CD8-positive, alpha-beta memory T cell (primary cell): ENCODE measurements at regions of chr1 and their contacts with region 1.

Region 1: GRCh38 chr1:154760469-154760933 is 109.6 kb downstream of the KCNN3 start:
- DNase-seq: peak; percentile 76 to 86 (median 77)
- H3K4me3 ChIP-seq: peak overlapping the region; percentile 39
- H3K4me3 Mint-ChIP-seq: peak overlapping the region in 4 of 7 donors; percentile 10 to 66 (median 56)
- H3K27ac ChIP-seq: no peak overlapping the region
- H3K27ac Mint-ChIP-seq: no peak overlapping the region
- H3K4me1 ChIP-seq: peaks cover 22% of the 10 kb centered on the region
- H3K4me1 Mint-ChIP-seq: peaks cover 13 to 19% (median 14%) of the 10 kb centered on the region in 3 donors
- H3K27me3 ChIP-seq: no peaks in the 10 kb centered on the region
- H3K27me3 Mint-ChIP-seq: peaks cover 13 to 25% of the 10 kb centered on the region in 2 donors

Region 2: GRCh38 chr1:154558575-154559465 is 201.7 kb before region 1 on chr1 and contains the start of gene UBE2Q1:
- CTCF ChIA-PET with region 1: interaction called, 28 read pairs
- POLR2A ChIA-PET with region 1: interaction called, 5 read pairs
- DNase-seq: peak; percentile 99 to 100 (median 100)
- H3K4me3 ChIP-seq: peak within 1 kb of the TSS; percentile 87
- H3K4me3 Mint-ChIP-seq: peak within 1 kb of the TSS; percentile 90 to 96 (median 92)
- H3K27ac ChIP-seq: peak within 1 kb of the TSS; percentile 65
- H3K27ac Mint-ChIP-seq: peak within 1 kb of the TSS; percentile 86 to 96 (median 94)
- H3K4me1 ChIP-seq: peaks cover 24% of the 10 kb centered on the region
- H3K4me1 Mint-ChIP-seq: peaks cover 36 to 49% (median 46%) of the 10 kb centered on the region in 3 donors
- H3K27me3 ChIP-seq: no peaks in the 10 kb centered on the region
- H3K27me3 Mint-ChIP-seq: peaks cover 0 to 2% of the 10 kb centered on the region in 2 donors
- total RNA-seq, gene UBE2Q1: 83.8 to 97.8 TPM

Region 3: GRCh38 chr1:154669464-154670282 is 90.8 kb before region 1 on chr1:
- CTCF ChIA-PET with region 1: interaction called, 10 read pairs
- POLR2A ChIA-PET with region 1: no interaction called
- DNase-seq: peak; percentile 37 to 82 (median 55)
- H3K4me3 ChIP-seq: no peak overlapping the region
- H3K4me3 Mint-ChIP-seq: no peak overlapping the region
- H3K27ac ChIP-seq: no peak overlapping the region
- H3K27ac Mint-ChIP-seq: no peak overlapping the region
- H3K4me1 ChIP-seq: no peaks in the 10 kb centered on the region
- H3K4me1 Mint-ChIP-seq: no peaks in the 10 kb centered on the region
- H3K27me3 ChIP-seq: no peaks in the 10 kb centered on the region
- H3K27me3 Mint-ChIP-seq: peaks cover 3 to 11% of the 10 kb centered on the region in 2 donors

Region 4: DNA sequence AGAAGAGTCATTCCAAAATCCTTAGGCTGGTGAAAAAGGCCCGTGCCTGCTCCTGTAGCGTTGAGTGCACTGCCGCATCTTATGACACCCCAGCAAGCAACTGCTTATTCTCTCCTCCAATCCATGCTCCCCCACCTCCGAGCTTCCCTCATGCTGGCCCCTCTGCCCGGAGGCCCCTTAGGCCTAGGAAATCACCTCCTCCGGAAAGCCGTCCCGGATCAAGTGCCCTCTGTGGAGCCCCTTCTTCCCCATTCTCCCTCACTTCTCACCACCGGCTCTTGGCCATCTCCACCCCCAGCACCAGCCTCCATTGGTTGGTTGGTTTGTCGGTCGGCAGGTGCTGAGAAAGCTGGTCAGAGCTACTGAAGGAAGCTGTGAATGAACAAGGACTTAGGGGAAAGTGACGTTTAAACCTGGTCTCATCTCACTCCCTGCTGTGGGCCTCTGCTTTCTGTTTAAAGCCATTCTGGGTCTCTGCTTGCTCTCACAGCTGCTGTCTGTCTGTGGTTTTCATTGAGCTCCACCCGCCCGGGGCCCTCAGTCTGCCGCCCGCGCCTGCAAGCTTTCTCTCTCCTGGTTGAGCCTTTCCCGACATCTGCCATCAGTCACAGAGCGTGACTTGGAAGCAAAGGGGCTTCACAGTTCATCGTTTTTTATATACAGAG is 12.6 kb before region 1 on chr1:
- CTCF ChIA-PET with region 1: interaction called, 16 read pairs
- POLR2A ChIA-PET with region 1: no interaction called
- DNase-seq: peak in 4 of 5 donors; percentile 31 to 59 (median 42)
- H3K4me3 ChIP-seq: no peak overlapping the region
- H3K4me3 Mint-ChIP-seq: peak overlapping the region in 6 of 7 donors; percentile 57 to 81 (median 63)
- H3K27ac ChIP-seq: no peak overlapping the region
- H3K27ac Mint-ChIP-seq: peak overlapping the region; percentile 28 to 91 (median 77)
- H3K4me1 ChIP-seq: peaks cover 50% of the 10 kb centered on the region
- H3K4me1 Mint-ChIP-seq: peaks cover 39 to 51% (median 44%) of the 10 kb centered on the region in 3 donors
- H3K27me3 ChIP-seq: no peaks in the 10 kb centered on the region
- H3K27me3 Mint-ChIP-seq: peaks cover 0 to 18% of the 10 kb centered on the region in 2 donors

Region 5: DNA sequence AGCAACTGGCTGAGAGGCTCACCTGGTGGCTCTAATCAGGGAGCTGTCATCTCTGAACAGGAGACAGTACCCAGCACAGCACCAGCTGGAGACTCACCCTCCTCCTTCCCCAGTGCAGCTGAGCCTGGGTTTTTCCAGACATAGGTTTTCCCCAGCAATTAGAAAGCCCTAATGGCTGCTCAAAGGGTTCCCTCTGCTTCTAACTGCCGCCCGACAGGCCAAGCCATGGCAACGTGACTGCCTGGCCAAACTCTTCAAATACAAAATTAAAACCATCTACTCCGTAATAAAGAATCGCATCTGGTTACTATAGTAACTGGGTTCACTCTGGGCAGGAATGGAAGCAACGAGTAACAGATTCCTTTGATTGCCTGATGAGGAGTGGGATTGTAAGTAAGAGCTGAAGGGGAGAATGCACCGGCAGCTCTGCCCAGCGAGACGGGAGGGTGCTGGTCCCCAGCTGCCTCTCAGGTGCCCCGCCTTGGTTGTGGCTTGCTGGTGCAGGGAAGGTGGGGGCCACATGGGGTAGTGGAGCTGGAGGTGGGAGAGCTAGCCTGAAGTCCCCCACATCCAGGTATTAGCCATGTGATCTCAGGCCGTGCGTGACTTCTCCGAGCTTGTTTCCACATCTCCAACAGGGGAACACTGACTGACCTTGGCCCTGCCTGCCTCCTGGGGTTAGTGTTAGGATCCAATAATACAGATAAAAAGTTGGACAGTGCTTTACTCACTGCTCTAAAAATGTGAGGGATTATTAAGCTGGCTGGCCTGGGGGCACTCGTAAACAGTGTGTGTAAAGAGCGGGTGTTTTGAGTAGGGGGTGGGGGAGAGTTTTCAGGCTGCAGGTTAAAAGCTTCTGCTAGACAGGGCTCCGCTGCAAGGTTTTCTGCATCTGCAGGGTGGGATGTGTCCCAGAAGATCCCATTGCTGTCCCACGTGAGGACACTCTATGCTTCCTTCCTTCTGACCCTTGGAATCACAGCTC is 15.4 kb after region 1 on chr1:
- CTCF ChIA-PET with region 1: interaction called, 11 read pairs
- POLR2A ChIA-PET with region 1: no interaction called
- DNase-seq: no peak
- H3K4me3 ChIP-seq: no peak overlapping the region
- H3K4me3 Mint-ChIP-seq: no peak overlapping the region
- H3K27ac ChIP-seq: no peak overlapping the region
- H3K27ac Mint-ChIP-seq: no peak overlapping the region
- H3K4me1 ChIP-seq: no peaks in the 10 kb centered on the region
- H3K4me1 Mint-ChIP-seq: no peaks in the 10 kb centered on the region
- H3K27me3 ChIP-seq: no peaks in the 10 kb centered on the region
- H3K27me3 Mint-ChIP-seq: peaks cover 0 to 4% of the 10 kb centered on the region in 2 donors

Region 6: GRCh38 chr1:154791292-154792166 is 31.0 kb after region 1 on chr1:
- CTCF ChIA-PET with region 1: interaction called, 29 read pairs
- POLR2A ChIA-PET with region 1: interaction called, 6 read pairs
- DNase-seq: peak; percentile 67 to 95 (median 92)
- H3K4me3 ChIP-seq: peak overlapping the region; percentile 54
- H3K4me3 Mint-ChIP-seq: peak overlapping the region; percentile 18 to 84 (median 76)
- H3K27ac ChIP-seq: no peak overlapping the region
- H3K27ac Mint-ChIP-seq: peak overlapping the region; percentile 72 to 94 (median 89)
- H3K4me1 ChIP-seq: peaks cover 31% of the 10 kb centered on the region
- H3K4me1 Mint-ChIP-seq: peaks cover 28 to 44% (median 36%) of the 10 kb centered on the region in 3 donors
- H3K27me3 ChIP-seq: no peaks in the 10 kb centered on the region
- H3K27me3 Mint-ChIP-seq: peaks cover 3% of the 10 kb centered on the region in 2 donors

Region 7: DNA sequence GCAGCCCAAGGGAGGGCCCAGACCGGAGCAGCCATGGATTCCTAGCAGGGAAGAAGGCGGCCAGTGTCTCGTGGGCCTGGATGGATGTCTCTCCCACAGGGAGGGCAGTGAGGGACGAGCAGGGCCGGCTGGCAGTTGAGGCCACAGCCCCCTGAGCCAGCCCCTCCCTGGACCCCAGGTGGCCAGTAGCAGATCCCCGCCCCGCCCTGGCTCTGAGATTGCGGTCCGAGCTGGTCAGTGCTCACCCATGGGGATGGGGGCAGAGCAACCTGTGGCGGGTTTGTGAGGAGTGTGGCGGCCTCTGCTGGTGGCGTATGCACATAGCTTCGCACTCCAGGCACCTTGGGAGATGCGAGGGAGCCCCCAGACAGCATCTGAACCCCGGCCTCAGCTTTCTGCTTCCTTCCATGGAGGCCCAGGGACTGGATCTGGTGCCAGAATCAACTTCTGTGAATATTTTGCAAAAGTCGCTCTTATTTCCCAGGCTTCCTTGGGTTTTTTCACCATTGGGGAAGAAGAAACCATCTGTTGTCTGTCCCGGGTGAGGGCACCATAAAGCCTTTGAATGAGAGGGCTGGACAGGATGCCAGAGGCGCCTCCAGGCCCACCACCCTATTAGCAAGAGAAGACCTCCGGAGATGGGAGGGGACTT is 118.0 kb after region 1 on chr1:
- CTCF ChIA-PET with region 1: interaction called, 10 read pairs
- POLR2A ChIA-PET with region 1: no interaction called
- DNase-seq: peak; percentile 50 to 78 (median 58)
- H3K4me3 ChIP-seq: no peak overlapping the region
- H3K4me3 Mint-ChIP-seq: no peak overlapping the region
- H3K27ac ChIP-seq: no peak overlapping the region
- H3K27ac Mint-ChIP-seq: no peak overlapping the region
- H3K4me1 ChIP-seq: no peaks in the 10 kb centered on the region
- H3K4me1 Mint-ChIP-seq: no peaks in the 10 kb centered on the region
- H3K27me3 ChIP-seq: no peaks in the 10 kb centered on the region
- H3K27me3 Mint-ChIP-seq: peaks cover 6 to 9% of the 10 kb centered on the region in 2 donors